ENCODE measurements at regions of chr16 and their contacts with region 1.

Region 1: DNA sequence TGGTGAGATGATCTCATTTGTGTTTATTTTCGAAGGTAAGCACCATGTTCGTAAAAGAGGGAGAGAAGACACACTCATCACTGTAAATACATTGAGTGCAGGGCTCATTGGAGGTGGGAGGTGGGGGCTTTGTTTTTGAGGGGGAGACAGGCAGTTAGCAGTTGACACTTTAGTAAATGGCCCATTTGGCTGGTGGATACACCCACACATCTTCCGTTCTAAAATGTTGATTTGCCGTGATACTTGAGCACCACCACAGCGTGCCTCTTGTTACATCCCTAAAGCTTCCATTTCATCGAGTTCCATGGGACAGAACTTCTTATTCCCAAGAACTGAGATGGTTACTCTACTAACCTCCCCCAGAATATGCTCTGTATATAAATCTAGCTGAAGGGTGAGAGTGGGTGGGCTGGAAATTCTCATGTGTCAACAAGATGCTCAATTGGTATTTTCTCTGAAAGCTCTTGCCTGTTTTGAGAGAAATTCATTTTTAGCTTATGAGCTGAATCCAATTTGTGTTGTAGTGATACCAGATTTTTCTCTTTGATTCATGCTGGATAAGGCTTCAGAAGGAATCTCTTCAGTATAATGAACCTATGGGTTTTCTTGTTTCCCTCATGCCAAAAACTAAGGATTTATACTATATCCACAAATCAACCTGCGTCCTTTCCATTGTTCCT is 314.3 kb downstream of the RBFOX1 start:
- DNase-seq: no peak
- ATAC-seq: no peak
- H3K4me3 ChIP-seq: no peak overlapping the region
- H3K27ac ChIP-seq: no peak overlapping the region
- H3K4me1 ChIP-seq: no peaks in the 10 kb centered on the region
- H3K27me3 ChIP-seq: no peaks in the 10 kb centered on the region
- CTCF ChIP-seq: no peak

Region 2: DNA sequence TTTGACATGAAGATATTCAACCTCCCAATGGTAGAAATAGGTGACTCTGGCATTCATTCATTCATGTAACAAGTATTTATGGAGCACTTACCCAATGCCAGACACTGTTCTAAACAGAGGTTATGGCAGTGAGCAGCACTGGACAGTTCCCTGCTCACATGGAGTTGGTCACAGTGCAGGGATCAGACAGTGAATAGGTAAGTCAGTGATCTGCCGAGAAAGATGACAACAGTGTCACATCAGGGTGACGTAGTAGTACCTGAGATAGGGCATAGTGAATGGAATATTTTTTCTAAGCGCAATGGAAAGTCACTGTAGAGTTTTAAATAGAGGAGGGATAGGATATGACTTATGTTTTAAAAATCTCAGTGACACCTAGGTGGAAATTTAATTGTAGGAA is 1105.7 kb before region 1 on chr16:
- intact Hi-C with region 1: no loop called
- DNase-seq: no peak
- ATAC-seq: no peak
- H3K4me3 ChIP-seq: no peak overlapping the region
- H3K27ac ChIP-seq: no peak overlapping the region
- H3K4me1 ChIP-seq: no peaks in the 10 kb centered on the region
- H3K27me3 ChIP-seq: no peaks in the 10 kb centered on the region
- CTCF ChIP-seq: no peak

Region 3: GRCh38 chr16:7703672-7704071 is 56.7 kb after region 1 on chr16:
- intact Hi-C with region 1: loop called in 1 of 10 experiments (anchors 10 kb)
- DNase-seq: no peak
- ATAC-seq: no peak
- H3K4me3 ChIP-seq: no peak overlapping the region
- H3K27ac ChIP-seq: no peak overlapping the region
- H3K4me1 ChIP-seq: no peaks in the 10 kb centered on the region
- H3K27me3 ChIP-seq: no peaks in the 10 kb centered on the region
- CTCF ChIP-seq: no peak